Breast epithelium (tissue), 4 donors: ENCODE measurements at regions of chr1 and their contacts with region 1.

Region 1: GRCh38 chr1:228082135-228082891 is at the start of gene ARF1:
- DNase-seq: peak; percentile 85 to 87
- H3K4me3 ChIP-seq: peak within 1 kb of the TSS; percentile 79 to 100 (median 100)
- H3K27ac ChIP-seq: peak within 1 kb of the TSS; percentile 98 to 100
- H3K4me1 ChIP-seq: peaks cover 12 to 29% of the 10 kb centered on the region in 2 donors
- H3K27me3 ChIP-seq: no peaks in the 10 kb centered on the region
- CTCF ChIP-seq: peak in 1 of 3 donors; percentile 11
- POLR2A ChIP-seq: no peak
- total RNA-seq, gene ARF1: 263 to 295 (median 292) TPM

Region 2: DNA sequence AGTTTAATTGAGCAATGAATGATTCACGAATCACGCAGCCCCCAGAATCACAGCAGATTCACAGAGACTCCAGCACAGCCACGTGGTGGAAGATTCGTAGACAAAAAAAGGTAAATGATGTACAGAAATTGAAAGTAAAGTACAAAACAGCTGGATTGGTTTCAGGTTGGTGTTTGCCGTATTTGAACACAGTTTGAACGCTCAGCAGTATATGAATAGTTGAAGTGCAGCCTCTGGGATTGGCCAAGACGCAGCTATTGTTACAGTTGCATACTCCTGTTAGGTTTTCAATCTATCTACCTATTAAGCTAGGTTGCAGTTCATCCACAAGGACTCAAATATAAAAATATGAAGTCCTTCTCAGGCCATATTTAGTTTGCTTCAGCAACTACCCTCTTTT is 29.9 kb after region 1 on chr1:
- intact Hi-C with region 1: loop called (anchors 2 kb)
- DNase-seq: no peak
- H3K4me3 ChIP-seq: no peak overlapping the region
- H3K27ac ChIP-seq: no peak overlapping the region
- H3K4me1 ChIP-seq: peaks cover 7 to 9% of the 10 kb centered on the region in 2 donors
- H3K27me3 ChIP-seq: no peaks in the 10 kb centered on the region
- CTCF ChIP-seq: no peak
- POLR2A ChIP-seq: no peak

Region 3: GRCh38 chr1:228275739-228276421 is 193.6 kb after region 1 on chr1:
- intact Hi-C with region 1: loop called (anchors 10 kb)
- DNase-seq: peak; percentile 88
- H3K4me3 ChIP-seq: peak overlapping the region; percentile 55 to 89 (median 62)
- H3K27ac ChIP-seq: peak overlapping the region; percentile 52 to 87
- H3K4me1 ChIP-seq: no peaks in the 10 kb centered on the region
- H3K27me3 ChIP-seq: no peaks in the 10 kb centered on the region
- CTCF ChIP-seq: no peak
- POLR2A ChIP-seq: no peak

Region 4: DNA sequence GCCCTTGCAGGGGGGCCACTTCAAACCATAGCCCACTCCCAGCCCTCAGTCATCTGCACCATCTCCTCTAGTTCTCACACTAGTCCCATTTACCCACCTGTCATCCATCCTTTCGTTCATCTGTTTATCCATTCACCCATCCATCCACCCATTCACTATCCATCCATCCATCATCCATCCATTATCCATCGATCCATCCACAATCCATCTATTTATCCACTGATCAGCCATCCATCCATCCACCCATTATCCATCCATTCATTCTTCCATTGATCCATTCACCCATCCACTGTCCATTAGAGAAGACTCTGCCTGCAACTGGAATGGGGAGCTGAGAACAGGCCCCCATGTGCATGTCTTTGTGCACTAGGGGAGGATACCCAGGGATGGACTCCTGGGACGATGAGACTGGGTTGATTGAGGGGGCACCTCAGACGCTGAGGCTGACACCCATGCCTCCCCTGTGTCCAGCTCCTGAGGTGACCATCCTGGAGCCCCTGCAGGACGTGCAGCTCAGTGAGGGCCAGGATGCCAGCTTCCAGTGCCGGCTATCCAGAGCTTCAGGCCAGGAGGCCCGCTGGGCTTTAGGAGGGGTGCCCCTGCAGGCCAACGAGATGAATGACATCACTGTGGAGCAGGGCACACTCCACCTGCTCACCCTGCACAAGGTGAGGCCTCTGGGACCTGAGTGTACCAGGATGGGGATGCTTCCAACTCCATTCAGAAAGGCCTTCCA is 226.5 kb after region 1 on chr1:
- intact Hi-C with region 1: no loop called
- DNase-seq: no peak
- H3K4me3 ChIP-seq: no peak overlapping the region
- H3K27ac ChIP-seq: no peak overlapping the region
- H3K4me1 ChIP-seq: no peaks in the 10 kb centered on the region
- H3K27me3 ChIP-seq: no peaks in the 10 kb centered on the region
- CTCF ChIP-seq: no peak
- POLR2A ChIP-seq: no peak